T-cell (primary cell): ENCODE measurements at regions of chr4 and their contacts with region 1.

Region 1: DNA sequence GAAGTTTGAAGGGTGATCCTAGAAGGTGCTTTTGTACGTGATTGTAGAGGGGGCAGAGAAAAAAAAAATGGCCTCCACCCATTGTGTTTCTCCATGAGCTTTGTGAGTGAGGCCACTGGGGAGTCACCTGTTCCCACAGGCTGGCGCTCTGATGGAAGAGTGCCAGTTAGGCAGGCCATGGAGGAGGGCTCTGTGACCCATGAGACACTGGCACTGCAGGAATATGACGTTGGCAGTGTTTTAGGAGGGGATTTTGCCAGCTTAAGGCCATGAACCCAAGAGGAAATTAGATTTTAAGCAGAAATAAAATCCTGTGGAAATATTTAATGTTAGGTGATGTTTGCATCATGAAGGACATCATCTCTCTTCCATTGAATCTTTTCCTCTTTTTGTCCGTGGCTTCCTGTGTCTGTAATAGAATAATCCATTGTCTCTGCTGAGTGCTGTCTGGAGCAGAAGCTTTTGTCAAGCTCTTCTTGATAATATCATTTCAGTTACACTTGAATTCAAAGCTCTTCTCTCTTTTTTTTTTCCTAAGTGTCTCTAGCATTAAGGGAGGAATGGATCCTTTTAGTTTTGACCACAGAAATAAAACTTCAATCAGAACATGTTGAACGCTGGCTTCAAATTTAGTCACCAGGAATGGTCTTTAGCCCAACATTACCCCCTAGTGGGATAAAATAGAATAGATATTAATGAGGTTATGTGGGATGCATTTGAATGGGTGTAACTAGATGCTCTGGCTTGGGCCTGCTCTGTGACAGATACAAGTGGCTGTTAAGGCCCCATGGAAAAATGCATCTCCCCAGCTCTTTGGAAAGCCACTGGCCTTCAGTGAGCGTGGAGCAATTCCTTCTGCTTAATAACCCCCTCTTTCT is 41.0 kb upstream of the UCP1 start:
- DNase-seq: peak in 1 of 35 experiments; percentile 48
- ATAC-seq: peak in 2 of 4 experiments; percentile 30 to 48
- H3K4me3 ChIP-seq: no peak overlapping the region
- H3K4me3 Mint-ChIP-seq: no peak overlapping the region
- H3K27ac ChIP-seq: no peak overlapping the region
- H3K27ac Mint-ChIP-seq: no peak overlapping the region
- H3K4me1 ChIP-seq: no peaks in the 10 kb centered on the region
- H3K4me1 Mint-ChIP-seq: no peaks in the 10 kb centered on the region
- H3K27me3 ChIP-seq: peaks cover 0 to 6% of the 10 kb centered on the region in 2 experiments
- H3K27me3 Mint-ChIP-seq: peaks cover 5 to 19% of the 10 kb centered on the region in 2 donors

Region 2: GRCh38 chr4:140359562-140360427 is 250.0 kb before region 1 on chr4:
- CTCF ChIA-PET with region 1: interaction called in 1 of 2 experiments, 19 read pairs
- POLR2A ChIA-PET with region 1: no interaction called
- DNase-seq: peak; percentile 34 to 87 (median 66)
- ATAC-seq: peak; percentile 83 to 97 (median 90)
- H3K4me3 ChIP-seq: no peak overlapping the region
- H3K4me3 Mint-ChIP-seq: no peak overlapping the region
- H3K27ac ChIP-seq: no peak overlapping the region
- H3K27ac Mint-ChIP-seq: no peak overlapping the region
- H3K4me1 ChIP-seq: no peaks in the 10 kb centered on the region
- H3K4me1 Mint-ChIP-seq: peaks cover 4 to 5% (median 4%) of the 10 kb centered on the region in 3 donors
- H3K27me3 ChIP-seq: peaks cover 0 to 3% of the 10 kb centered on the region in 2 experiments
- H3K27me3 Mint-ChIP-seq: no peaks in the 10 kb centered on the region

Region 3: GRCh38 chr4:141133146-141133998 is 523.6 kb after region 1 on chr4 and contains the start of gene RNF150:
- CTCF ChIA-PET with region 1: no interaction called
- POLR2A ChIA-PET with region 1: no interaction called
- DNase-seq: peak in 10 of 35 experiments; percentile 3 to 32 (median 10)
- ATAC-seq: peak; percentile 42 to 58 (median 48)
- H3K4me3 ChIP-seq: peak within 1 kb of the TSS in 1 of 2 donors; percentile 76
- H3K4me3 Mint-ChIP-seq: peak within 1 kb of the TSS; percentile 70 to 85 (median 74)
- H3K27ac ChIP-seq: no peak within 1 kb of the TSS
- H3K27ac Mint-ChIP-seq: no peak within 1 kb of the TSS
- H3K4me1 ChIP-seq: peaks cover 0 to 12% of the 10 kb centered on the region in 2 experiments
- H3K4me1 Mint-ChIP-seq: peaks cover 12 to 18% (median 17%) of the 10 kb centered on the region in 3 donors
- H3K27me3 ChIP-seq: peaks cover 0 to 23% of the 10 kb centered on the region in 2 experiments
- H3K27me3 Mint-ChIP-seq: peaks cover 65 to 67% of the 10 kb centered on the region in 2 donors
- total RNA-seq, gene RNF150: 0.09 to 0.35 (median 0.30) TPM in 3 of 5 donors, not detected in the others